ENCODE measurements at regions of chr18 and their contacts with region 1.

Region 1: DNA sequence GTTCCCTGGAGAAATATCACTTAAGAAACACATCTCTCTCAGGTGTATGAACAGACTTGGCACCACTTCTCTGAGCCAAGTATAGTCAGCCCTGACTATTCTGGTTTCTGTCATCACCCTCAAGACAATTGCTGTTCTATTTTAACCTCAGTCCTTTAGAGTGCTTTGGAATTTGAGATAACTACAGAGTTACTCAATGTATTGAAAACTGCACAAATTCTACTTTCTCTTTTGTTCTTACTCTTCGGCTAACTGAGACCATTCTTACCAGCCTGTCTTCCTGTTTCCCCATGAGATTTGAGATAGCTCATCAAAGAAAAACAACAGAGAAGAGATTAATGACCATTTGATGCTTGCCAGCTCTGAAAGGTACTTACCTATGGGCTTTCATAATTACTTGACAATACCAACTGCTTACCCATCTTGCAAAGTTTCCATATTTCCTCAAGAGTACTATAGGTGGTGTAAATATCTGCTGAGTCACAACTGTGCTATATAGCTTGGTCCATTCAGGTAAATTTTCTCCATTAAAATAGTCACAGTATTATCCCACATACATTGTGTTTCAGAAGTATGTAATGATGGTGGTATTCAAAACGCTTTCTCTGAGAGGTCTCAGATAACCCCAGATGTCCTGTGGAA is 467.5 kb upstream of the CHST9 start:
- DNase-seq: no peak
- ATAC-seq: no peak
- H3K4me3 ChIP-seq: no peak overlapping the region
- H3K27ac ChIP-seq: no peak overlapping the region
- H3K4me1 ChIP-seq: no peaks in the 10 kb centered on the region
- H3K27me3 ChIP-seq: no peaks in the 10 kb centered on the region
- CTCF ChIP-seq: no peak
- POLR2A ChIP-seq: no peak

Region 2: DNA sequence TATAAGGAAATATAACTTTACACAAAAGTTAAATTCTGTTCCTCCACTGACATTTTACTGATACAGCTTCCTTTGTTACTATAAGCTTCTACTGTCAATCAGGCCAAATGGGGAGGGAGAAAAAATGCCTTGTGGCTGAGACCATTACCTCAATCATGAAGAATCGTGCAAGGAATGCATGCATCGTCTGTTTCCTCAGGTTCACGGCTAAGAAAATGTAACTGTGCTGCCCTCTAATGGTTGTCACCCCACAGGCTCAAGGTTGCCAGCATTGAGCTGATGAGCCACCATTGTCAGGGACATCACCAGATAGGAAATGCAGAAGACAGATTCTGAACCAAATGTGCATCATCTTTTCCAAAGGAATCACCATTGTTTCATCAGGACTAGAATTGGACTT is 97.4 kb after region 1 on chr18:
- in situ Hi-C with region 1: loop called in 1 of 4 experiments (anchors 25 kb)
- intact Hi-C with region 1: no loop called
- DNase-seq: no peak
- ATAC-seq: no peak
- H3K4me3 ChIP-seq: no peak overlapping the region
- H3K27ac ChIP-seq: no peak overlapping the region
- H3K4me1 ChIP-seq: no peaks in the 10 kb centered on the region
- H3K27me3 ChIP-seq: no peaks in the 10 kb centered on the region
- CTCF ChIP-seq: peak in 2 of 5 experiments; percentile 24
- POLR2A ChIP-seq: no peak

Measured in gastrocnemius medialis (tissue), 4 donors.